ENCODE measurements at regions of chr7 and their contacts with region 1.

Region 1: DNA sequence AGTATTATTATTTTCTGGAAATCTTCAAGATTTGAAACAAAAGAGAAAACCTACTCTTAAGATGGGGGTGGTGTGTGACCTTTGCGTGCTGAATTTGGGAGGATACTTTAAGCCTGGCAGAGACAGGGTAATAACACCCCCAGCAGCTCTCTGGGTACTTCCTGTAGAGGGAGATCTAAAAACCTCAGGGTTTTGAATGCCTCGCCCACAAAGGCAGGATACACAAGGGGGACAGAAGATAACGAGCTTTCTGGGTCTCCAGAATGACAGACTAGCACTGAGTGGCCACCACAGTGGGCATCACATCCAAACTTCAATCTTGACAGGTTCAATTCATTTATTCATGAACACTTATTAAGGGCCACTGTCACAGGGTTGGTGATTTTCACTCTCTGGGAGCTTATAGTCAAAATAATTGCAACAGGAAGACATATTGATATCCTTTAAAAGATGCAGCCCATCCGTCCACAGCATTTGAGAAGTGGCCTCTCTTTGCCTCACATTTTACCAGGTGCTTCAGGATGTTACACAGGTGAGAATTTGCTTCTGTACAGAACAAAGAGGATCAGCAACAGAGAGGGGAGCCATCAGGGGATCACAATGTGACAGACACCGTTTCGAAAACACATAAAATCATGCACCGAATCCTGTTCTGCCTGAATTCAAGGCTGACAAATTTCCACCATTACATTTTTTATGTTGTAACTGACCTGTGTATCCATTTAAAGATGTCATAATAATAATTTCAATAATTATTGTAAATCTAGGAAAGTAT is 14.3 kb downstream of the CPA1 start:
- DNase-seq: no peak
- H3K4me3 ChIP-seq: no peak overlapping the region
- H3K27ac ChIP-seq: peak overlapping the region in 1 of 4 donors; percentile 75
- H3K4me1 ChIP-seq: peaks cover 0 to 12% (median 0%) of the 10 kb centered on the region in 4 donors
- H3K27me3 ChIP-seq: no peaks in the 10 kb centered on the region
- CTCF ChIP-seq: no peak
- EP300 ChIP-seq: no peak
- POLR2A ChIP-seq: no peak

Region 2: GRCh38 chr7:130352221-130353075 is 42.2 kb before region 1 on chr7:
- in situ Hi-C with region 1: no loop called
- intact Hi-C with region 1: loop called (anchors 2 kb)
- DNase-seq: no peak
- H3K4me3 ChIP-seq: no peak overlapping the region
- H3K27ac ChIP-seq: peak overlapping the region; percentile 36 to 68 (median 64)
- H3K4me1 ChIP-seq: peaks cover 4 to 31% (median 8%) of the 10 kb centered on the region in 4 donors
- H3K27me3 ChIP-seq: no peaks in the 10 kb centered on the region
- CTCF ChIP-seq: no peak
- EP300 ChIP-seq: no peak
- POLR2A ChIP-seq: no peak

Region 3: DNA sequence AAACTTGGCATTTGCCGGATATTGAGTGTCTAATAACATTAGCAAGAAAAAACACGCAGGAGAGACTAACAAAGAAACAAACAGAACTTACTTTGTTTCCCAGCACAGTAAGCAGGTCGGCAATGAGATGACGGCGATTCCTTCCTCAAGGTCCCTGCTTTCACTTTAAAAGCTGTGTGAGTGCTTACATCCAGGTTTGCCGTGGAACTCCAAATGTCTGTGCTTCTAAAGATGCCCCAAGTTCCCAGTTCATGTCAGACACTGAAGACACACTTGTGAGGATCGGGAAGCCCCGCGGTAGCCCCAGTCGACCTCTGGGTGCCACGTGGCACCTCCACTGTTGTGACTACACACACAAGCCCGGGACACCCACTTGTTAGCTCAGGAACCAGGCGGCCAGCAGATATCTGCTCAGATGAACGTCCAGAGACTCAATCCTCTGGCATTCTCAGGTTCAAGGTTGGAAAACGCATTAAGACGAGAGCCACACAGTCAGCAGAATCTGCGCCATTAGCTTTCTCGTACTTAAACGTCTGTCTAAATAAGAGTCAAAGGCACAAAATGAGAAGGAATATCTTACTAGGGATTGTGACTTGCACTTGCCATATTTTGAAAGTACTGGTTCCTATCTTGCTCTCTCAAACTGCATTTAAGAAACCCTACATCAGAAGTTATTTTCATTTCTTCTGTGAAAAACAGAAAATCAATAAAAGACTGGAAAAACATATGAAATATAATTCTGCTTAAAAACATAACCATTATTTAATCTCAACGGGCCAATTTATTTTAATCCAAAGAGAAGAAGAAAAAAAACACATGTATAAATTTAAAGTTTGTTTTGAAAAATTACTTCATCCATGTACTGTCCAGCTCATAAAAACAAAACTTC is 547.0 kb after region 1 on chr7:
- in situ Hi-C with region 1: no loop called
- intact Hi-C with region 1: no loop called
- DNase-seq: peak; percentile 72
- H3K4me3 ChIP-seq: peak overlapping the region; percentile 0 to 57 (median 36)
- H3K27ac ChIP-seq: peak overlapping the region; percentile 77 to 85 (median 84)
- H3K4me1 ChIP-seq: peaks cover 9 to 72% (median 24%) of the 10 kb centered on the region in 4 donors
- H3K27me3 ChIP-seq: no peaks in the 10 kb centered on the region
- CTCF ChIP-seq: no peak
- EP300 ChIP-seq: no peak
- POLR2A ChIP-seq: peak; percentile 43